ENCODE measurements at regions of chr5 and their contacts with region 1.

Region 1: GRCh38 chr5:116514421-116514970 is 60.1 kb downstream of the SEMA6A start:
- DNase-seq: no peak
- ATAC-seq: no peak
- H3K4me3 ChIP-seq: no peak overlapping the region
- H3K27ac ChIP-seq: no peak overlapping the region
- H3K4me1 ChIP-seq: no peaks in the 10 kb centered on the region
- H3K27me3 ChIP-seq: no peaks in the 10 kb centered on the region
- CTCF ChIP-seq: no peak
- EP300 ChIP-seq: no peak
- POLR2A ChIP-seq: no peak
- RAD21 ChIP-seq: no peak

Region 2: GRCh38 chr5:116528519-116529234 is 14.2 kb after region 1 on chr5:
- CTCF ChIA-PET with region 1: interaction called, 3 read pairs
- POLR2A ChIA-PET with region 1: interaction called, 5 read pairs
- RAD21 ChIA-PET with region 1: no interaction called
- SMC1A ChIA-PET with region 1: interaction called, 10 read pairs
- in situ Hi-C with region 1: no loop called
- intact Hi-C with region 1: no loop called
- DNase-seq: no peak
- ATAC-seq: no peak
- H3K4me3 ChIP-seq: no peak overlapping the region
- H3K27ac ChIP-seq: no peak overlapping the region
- H3K4me1 ChIP-seq: no peaks in the 10 kb centered on the region
- H3K27me3 ChIP-seq: no peaks in the 10 kb centered on the region
- CTCF ChIP-seq: no peak
- EP300 ChIP-seq: no peak
- POLR2A ChIP-seq: no peak
- RAD21 ChIP-seq: no peak

Region 3: GRCh38 chr5:116613445-116613844 is 98.9 kb after region 1 on chr5:
- CTCF ChIA-PET with region 1: no interaction called
- POLR2A ChIA-PET with region 1: no interaction called
- RAD21 ChIA-PET with region 1: no interaction called
- SMC1A ChIA-PET with region 1: no interaction called
- in situ Hi-C with region 1: no loop called
- intact Hi-C with region 1: no loop called
- DNase-seq: no peak
- ATAC-seq: peak; percentile 87
- H3K4me3 ChIP-seq: no peak overlapping the region
- H3K27ac ChIP-seq: peak overlapping the region; percentile 69; the same call in 1 of the 2 replicates
- H3K4me1 ChIP-seq: peaks cover 17% of the 10 kb centered on the region
- H3K27me3 ChIP-seq: no peaks in the 10 kb centered on the region
- CTCF ChIP-seq: no peak
- EP300 ChIP-seq: no peak
- POLR2A ChIP-seq: no peak
- RAD21 ChIP-seq: no peak

Measured in GM12878 (cell line).